Dorsolateral prefrontal cortex (tissue), 120 donors: ENCODE measurements at regions of chr1 and their contacts with region 1.

Region 1: DNA sequence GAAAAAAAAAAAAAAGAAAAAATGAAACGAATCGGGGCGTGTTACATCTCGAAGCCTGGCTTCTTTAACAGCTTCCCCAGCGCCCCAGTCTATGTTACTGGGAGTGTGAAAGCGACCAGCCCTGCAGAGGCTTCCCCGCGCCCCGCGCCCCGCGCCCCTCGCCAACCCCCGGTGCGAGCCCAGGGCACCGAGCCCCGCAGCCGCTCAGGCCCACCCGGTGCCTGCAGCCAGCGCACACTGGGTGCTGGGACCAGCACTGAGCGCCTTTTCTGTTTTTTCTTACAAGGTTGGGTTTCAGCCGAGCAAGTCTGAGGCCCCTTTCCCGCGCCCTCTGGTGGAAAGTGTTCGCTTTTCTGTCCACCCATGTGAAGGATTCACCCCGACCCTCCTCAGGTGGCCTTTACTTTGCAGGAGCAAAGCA is 42.1 kb upstream of the ZNF496 start:
- DNase-seq: peak in 5 of 10 donors; percentile 5 to 59 (median 37)
- H3K4me3 ChIP-seq: peak overlapping the region in 42 of 59 donors; percentile 10 to 61 (median 42)
- H3K27ac ChIP-seq: no peak overlapping the region
- H3K27me3 ChIP-seq: no peaks in the 10 kb centered on the region
- CTCF ChIP-seq: peak in 52 of 56 donors; percentile 8 to 66 (median 44)

Region 2: GRCh38 chr1:247331172-247331991 is 42.3 kb before region 1 on chr1 and contains the start of gene ZNF496:
- intact Hi-C with region 1: loop called in 1 of 2 experiments (anchors 5 kb)
- DNase-seq: peak; percentile 48 to 86 (median 71)
- H3K4me3 ChIP-seq: peak within 1 kb of the TSS; percentile 69 to 99 (median 93)
- H3K27ac ChIP-seq: peak within 1 kb of the TSS; percentile 61 to 94 (median 85)
- H3K27me3 ChIP-seq: no peaks in the 10 kb centered on the region
- CTCF ChIP-seq: peak in 1 of 56 donors; percentile 4
- total RNA-seq, gene ZNF496: 18.3 to 43.2 (median 27.3) TPM

Region 3: DNA sequence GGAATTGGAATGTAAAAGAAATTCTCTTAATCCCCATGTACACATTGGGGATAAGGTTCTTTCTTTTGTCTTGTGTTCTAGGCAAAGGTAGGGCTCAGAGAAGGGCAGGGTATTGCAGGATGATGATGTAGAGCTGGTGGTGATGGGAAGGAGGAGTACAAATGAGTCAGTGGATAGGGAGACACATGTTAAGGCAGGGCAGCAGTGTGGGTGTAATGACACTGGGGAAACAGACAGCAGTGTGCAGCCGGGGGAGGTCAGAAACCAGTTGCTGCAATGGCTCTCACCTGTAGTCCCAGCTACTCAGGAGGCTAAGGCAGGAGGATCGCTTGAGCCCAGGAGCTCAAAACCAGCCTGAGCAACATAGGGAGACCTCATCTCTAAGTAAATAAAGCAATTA is 47.3 kb after region 1 on chr1:
- intact Hi-C with region 1: no loop called
- DNase-seq: no peak
- H3K4me3 ChIP-seq: peak overlapping the region in 4 of 59 donors; percentile 4 to 27 (median 8)
- H3K27ac ChIP-seq: no peak overlapping the region
- H3K27me3 ChIP-seq: no peaks in the 10 kb centered on the region
- CTCF ChIP-seq: no peak

Region 4: GRCh38 chr1:247448107-247448791 is 74.5 kb after region 1 on chr1:
- intact Hi-C with region 1: loop called in 1 of 2 experiments (anchors 2 kb)
- DNase-seq: peak; percentile 49 to 67 (median 59)
- H3K4me3 ChIP-seq: peak overlapping the region; percentile 32 to 77 (median 61)
- H3K27ac ChIP-seq: peak overlapping the region in 52 of 59 donors; percentile 4 to 88 (median 70)
- H3K27me3 ChIP-seq: no peaks in the 10 kb centered on the region
- CTCF ChIP-seq: peak in 10 of 56 donors; percentile 7 to 25 (median 17)

Region 5: DNA sequence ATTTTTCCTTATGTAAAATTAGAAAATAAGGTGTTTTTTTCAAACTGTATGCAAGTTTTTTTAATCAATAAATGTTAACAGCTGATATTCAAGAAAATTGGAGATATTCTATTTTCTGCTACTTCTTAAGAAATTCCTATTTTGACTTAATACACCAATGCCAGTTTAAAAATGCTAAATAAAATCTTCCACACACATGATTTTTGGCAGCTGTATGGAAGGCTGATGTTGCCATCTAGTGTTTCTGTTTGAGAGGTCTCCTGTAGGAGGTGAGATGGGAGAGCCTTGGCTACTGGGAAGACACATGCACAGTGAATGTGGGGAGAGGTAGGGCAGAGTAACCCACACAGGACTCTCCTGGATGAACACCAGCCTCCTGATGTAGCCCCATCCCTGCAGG is 113.3 kb after region 1 on chr1:
- intact Hi-C with region 1: loop called (anchors 5 to 10 kb)
- DNase-seq: peak in 1 of 10 donors; percentile 18
- H3K4me3 ChIP-seq: no peak overlapping the region
- H3K27ac ChIP-seq: no peak overlapping the region
- H3K27me3 ChIP-seq: peaks cover 0 to 12% (median 0%) of the 10 kb centered on the region in 45 donors
- CTCF ChIP-seq: peak in 54 of 56 donors; percentile 46 to 80 (median 61)

Region 6: DNA sequence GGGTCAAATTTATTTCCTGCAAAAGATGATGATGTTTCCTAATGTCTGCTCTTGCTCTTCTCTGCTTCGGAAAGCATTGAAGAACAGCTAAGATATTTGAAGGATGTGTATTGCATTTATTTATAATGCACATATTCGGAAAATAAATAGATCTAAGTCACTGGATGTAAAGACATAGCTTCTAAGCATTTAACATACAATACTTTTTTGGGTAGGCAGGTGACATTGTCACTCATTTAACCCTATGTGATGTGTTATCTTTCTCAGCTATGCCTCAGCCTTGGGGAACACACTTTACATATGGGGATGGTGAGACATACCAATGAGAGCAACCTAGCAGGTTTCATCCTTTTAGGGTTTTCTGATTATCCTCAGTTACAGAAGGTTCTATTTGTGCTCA is 214.3 kb after region 1 on chr1 and contains the start of gene OR2G2:
- intact Hi-C with region 1: no loop called
- DNase-seq: no peak
- H3K4me3 ChIP-seq: no peak within 1 kb of the TSS
- H3K27ac ChIP-seq: no peak within 1 kb of the TSS
- H3K27me3 ChIP-seq: peaks cover 0 to 3% (median 0%) of the 10 kb centered on the region in 45 donors
- CTCF ChIP-seq: no peak
- total RNA-seq, gene OR2G2: not detected